Activated naive CD4-positive, alpha-beta T cell treated with anti-CD3 and anti-CD28 coated beads for 36 hours (primary cell): ENCODE measurements at regions of chr11 and their contacts with region 1.

Region 1: GRCh38 chr11:64341851-64342791 is 2.1 kb downstream of the CCDC88B start:
- DNase-seq: peak; percentile 95
- H3K4me3 Mint-ChIP-seq: peak overlapping the region; percentile 18
- H3K27ac Mint-ChIP-seq: no peak overlapping the region
- H3K4me1 Mint-ChIP-seq: peaks cover 34% of the 10 kb centered on the region
- H3K27me3 Mint-ChIP-seq: no peaks in the 10 kb centered on the region

Region 2: DNA sequence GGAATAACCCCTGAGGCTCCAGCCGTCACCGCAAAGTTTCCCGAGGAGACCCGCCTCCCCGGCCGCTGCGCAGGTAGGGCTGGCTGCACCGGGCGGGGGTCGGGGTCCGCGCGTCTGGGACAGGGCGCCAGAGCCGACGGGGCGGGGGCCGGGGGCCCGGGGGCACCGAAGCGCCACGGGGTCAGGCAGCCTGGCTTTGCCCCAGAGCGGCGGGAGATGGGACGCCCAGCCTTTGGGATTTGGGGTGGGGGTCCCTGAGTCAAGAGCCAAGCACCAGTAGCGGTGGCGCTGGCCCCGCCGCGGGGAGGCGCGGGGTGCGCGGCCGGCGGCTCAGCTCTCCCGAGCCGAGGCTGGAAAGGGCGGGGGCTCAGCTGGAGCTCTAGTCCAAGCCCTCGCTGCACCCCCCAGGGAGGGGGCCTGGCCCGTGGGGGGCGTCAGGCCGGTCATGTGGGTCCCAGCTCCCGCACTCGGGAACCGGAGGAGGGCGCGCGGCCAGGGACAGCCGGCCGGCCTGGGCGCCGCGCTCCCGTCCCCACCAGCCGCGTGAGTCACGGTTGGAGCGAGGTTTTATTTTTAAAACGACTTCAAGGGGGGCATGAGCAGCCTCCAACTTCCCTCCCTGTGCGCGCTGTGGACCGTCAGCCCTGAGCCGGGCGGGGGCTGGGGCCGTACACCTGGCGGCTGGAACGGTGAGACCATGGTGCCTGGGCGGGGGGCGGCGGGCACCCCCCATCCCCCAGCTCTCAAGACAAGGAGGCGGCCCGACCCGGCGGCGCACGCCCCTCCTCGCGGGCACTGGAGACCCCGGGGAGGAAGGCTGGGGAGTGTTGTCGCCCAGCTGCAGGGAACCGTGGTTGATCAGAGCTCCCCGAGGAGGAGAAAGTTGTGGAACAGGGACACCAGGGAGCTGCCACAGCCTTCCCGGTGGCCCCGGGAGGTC is 305.8 kb before region 1 on chr11:
- CTCF ChIA-PET with region 1: no interaction called
- intact Hi-C with region 1: no loop called
- DNase-seq: no peak
- H3K4me3 Mint-ChIP-seq: no peak overlapping the region
- H3K27ac Mint-ChIP-seq: no peak overlapping the region
- H3K4me1 Mint-ChIP-seq: peaks cover 10% of the 10 kb centered on the region
- H3K27me3 Mint-ChIP-seq: peaks cover 21% of the 10 kb centered on the region

Region 3: DNA sequence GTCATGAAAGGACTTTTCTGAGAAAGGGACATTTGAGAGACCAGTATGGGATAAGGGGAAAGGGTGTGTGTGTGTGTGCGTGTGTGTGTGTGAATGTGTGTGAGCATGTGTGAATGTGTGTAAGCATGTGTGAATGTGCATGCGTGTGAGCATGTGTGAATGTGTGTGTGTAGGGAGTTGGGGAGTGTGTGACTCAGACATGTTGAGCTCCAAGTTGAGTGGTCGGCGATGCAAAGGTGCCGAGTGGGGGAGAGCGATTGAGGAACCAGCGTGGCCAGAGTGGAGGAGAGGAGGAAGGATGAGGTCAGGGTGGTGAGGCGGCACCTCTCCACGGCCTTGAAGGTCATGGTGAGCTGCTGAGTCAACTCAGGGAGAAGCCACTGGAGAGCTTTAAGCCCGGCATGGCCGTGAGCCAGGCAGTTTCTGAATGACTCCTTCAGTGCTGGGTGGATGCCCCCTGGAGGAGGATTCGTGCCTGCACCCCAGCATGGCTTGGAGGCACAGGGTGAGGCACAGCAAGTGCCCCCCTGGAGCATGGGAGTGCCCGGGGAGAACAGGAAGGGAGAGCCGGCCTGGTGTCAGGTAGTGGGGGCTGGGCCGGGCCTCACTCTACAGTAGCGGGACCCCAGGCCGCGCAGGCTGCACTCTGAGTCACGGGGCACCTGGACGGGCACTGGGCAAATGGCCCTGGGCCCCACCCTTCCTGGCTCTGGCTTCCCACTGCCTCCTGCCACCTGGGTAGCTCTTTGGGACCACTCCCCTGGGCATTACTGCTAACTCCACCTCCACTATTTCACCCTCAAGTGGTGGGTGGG is 10.4 kb before region 1 on chr11:
- CTCF ChIA-PET with region 1: interaction called, 4 read pairs
- intact Hi-C with region 1: loop called (anchors 1 kb)
- DNase-seq: peak; percentile 82
- H3K4me3 Mint-ChIP-seq: no peak overlapping the region
- H3K27ac Mint-ChIP-seq: no peak overlapping the region
- H3K4me1 Mint-ChIP-seq: peaks cover 10% of the 10 kb centered on the region
- H3K27me3 Mint-ChIP-seq: no peaks in the 10 kb centered on the region

Region 4: GRCh38 chr11:64500176-64501013 is 158.3 kb after region 1 on chr11:
- CTCF ChIA-PET with region 1: no interaction called
- intact Hi-C with region 1: no loop called
- DNase-seq: no peak
- H3K4me3 Mint-ChIP-seq: no peak overlapping the region
- H3K27ac Mint-ChIP-seq: no peak overlapping the region
- H3K4me1 Mint-ChIP-seq: no peaks in the 10 kb centered on the region
- H3K27me3 Mint-ChIP-seq: no peaks in the 10 kb centered on the region